ENCODE measurements at regions of chr14 and their contacts with region 1.

Region 1: DNA sequence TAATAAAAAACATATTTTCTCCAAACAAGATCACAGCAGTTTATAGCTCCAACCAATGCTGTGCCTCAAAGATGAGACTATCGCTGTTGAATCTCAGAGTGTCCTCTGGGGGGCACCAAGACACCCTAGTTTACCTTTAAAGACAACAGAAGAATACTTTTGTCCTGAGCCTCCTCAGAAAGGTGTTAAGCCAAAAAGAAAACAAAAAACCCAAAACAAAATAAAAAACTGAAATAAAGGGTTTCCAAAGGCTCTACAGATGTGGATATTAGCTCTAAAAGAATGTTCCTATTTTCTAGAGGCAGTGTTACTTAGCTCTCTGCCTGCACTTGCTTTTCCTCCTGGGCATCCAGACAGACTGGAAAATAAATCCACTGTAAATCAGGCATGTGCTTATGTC is 86.9 kb upstream of the TTC7B start:
- DNase-seq: peak; percentile 72
- H3K4me3 ChIP-seq: no peak overlapping the region
- H3K27ac ChIP-seq: no peak overlapping the region
- H3K4me1 ChIP-seq: no peaks in the 10 kb centered on the region
- H3K27me3 ChIP-seq: no peaks in the 10 kb centered on the region
- CTCF ChIP-seq: peak; percentile 59 to 66
- POLR2A ChIP-seq: no peak

Region 2: GRCh38 chr14:90795746-90796145 is 107.4 kb before region 1 on chr14:
- CTCF ChIA-PET with region 1: interaction called, 10 read pairs
- POLR2A ChIA-PET with region 1: no interaction called
- dilution Hi-C with region 1: no loop called
- intact Hi-C with region 1: no loop called
- DNase-seq: peak; percentile 92
- H3K4me3 ChIP-seq: no peak overlapping the region
- H3K27ac ChIP-seq: peak overlapping the region; percentile 88
- H3K4me1 ChIP-seq: peaks cover 30% of the 10 kb centered on the region
- H3K27me3 ChIP-seq: no peaks in the 10 kb centered on the region
- CTCF ChIP-seq: no peak
- POLR2A ChIP-seq: no peak

Region 3: DNA sequence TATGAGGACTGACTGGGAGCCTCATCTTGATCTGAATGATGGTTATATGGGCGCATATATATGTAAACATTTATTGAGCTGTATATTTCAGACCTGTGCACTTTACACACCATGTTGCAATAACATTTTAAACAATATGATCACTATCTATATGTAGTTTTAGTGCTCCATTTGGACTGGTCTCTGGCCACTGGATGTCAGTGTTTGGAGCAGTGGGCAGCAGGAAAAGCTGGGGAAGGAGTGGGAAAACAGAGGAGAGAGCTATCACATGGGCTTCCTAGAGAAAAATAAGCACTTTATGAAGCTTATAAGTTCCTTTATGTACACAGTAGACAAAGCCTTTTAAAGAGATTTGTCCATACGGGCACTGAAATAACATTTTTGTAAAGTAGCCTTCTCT is 37.6 kb before region 1 on chr14:
- CTCF ChIA-PET with region 1: interaction called, 14 read pairs
- POLR2A ChIA-PET with region 1: no interaction called
- dilution Hi-C with region 1: no loop called
- intact Hi-C with region 1: no loop called
- DNase-seq: no peak
- H3K4me3 ChIP-seq: no peak overlapping the region
- H3K27ac ChIP-seq: no peak overlapping the region
- H3K4me1 ChIP-seq: no peaks in the 10 kb centered on the region
- H3K27me3 ChIP-seq: no peaks in the 10 kb centered on the region
- CTCF ChIP-seq: no peak
- POLR2A ChIP-seq: no peak

Region 4: DNA sequence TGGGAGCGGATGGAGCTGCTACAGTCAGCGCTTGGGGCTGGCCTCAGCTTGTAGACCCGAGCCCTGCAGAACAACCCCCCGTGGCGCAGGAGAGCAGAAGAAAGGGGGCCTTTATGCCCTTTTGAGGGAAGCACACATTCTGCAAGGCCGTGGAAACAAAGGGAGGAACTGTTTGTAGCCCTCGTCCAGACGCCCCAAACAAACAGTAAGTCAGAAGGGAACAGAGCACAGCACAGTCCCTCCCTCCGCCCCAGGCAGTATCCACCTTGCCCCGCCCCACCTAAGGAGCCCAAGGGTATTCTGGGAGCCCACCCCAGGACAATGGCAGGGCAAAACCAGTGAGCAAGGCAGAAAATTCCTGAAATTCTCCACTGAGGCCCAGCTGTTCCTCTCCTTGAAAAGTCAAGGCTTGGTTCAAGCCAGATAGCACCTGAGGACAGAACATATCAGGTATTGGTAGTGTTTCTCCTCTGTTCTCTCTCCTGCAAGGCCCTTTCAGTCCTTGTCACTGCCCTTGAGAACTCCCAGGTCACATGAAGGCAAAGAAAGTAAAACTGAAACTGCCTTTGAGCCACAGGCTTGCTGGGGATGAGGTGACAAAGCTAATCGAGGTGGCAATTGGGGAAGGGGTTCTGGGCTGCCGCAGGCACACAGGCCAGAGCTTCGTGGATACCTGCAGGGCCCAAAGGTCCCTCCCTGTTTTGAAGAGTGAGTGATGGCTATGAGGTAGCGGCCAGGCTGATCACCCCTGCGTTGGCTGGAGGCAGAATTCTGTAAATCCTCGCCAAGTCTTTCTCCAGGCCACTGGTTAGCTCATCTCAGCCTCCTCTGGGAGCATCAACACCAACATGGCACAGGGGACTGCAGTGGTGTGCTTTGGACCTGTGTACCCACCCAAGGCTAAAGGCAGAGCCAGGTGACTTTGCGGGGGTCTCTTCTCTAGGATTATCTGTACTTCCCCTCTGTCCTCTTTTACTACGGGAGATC is 211.3 kb after region 1 on chr14:
- CTCF ChIA-PET with region 1: interaction called, 21 read pairs
- POLR2A ChIA-PET with region 1: no interaction called
- dilution Hi-C with region 1: no loop called
- intact Hi-C with region 1: no loop called
- DNase-seq: peak; percentile 91
- H3K4me3 ChIP-seq: peak overlapping the region; percentile 25 to 66 (median 31)
- H3K27ac ChIP-seq: peak overlapping the region; percentile 79
- H3K4me1 ChIP-seq: peaks cover 42% of the 10 kb centered on the region
- H3K27me3 ChIP-seq: no peaks in the 10 kb centered on the region
- CTCF ChIP-seq: no peak
- POLR2A ChIP-seq: peak; percentile 68

Region 5: GRCh38 chr14:91149479-91149921 is 246.4 kb after region 1 on chr14:
- CTCF ChIA-PET with region 1: interaction called, 12 read pairs
- POLR2A ChIA-PET with region 1: no interaction called
- dilution Hi-C with region 1: no loop called
- intact Hi-C with region 1: no loop called
- DNase-seq: peak; percentile 91
- H3K4me3 ChIP-seq: no peak overlapping the region
- H3K27ac ChIP-seq: peak overlapping the region; percentile 13
- H3K4me1 ChIP-seq: peaks cover 19% of the 10 kb centered on the region
- H3K27me3 ChIP-seq: no peaks in the 10 kb centered on the region
- CTCF ChIP-seq: no peak
- POLR2A ChIP-seq: no peak

Region 6: GRCh38 chr14:91286530-91286937 is 383.4 kb after region 1 on chr14:
- CTCF ChIA-PET with region 1: interaction called, 21 read pairs
- POLR2A ChIA-PET with region 1: no interaction called
- dilution Hi-C with region 1: loop called (anchors 25 kb)
- intact Hi-C with region 1: loop called (anchors 1 kb)
- DNase-seq: peak; percentile 82
- H3K4me3 ChIP-seq: no peak overlapping the region
- H3K27ac ChIP-seq: no peak overlapping the region
- H3K4me1 ChIP-seq: no peaks in the 10 kb centered on the region
- H3K27me3 ChIP-seq: no peaks in the 10 kb centered on the region
- CTCF ChIP-seq: peak; percentile 73 to 84
- POLR2A ChIP-seq: no peak

Measured in endothelial cell of umbilical vein (primary cell).